GM10248 (cell line): ENCODE measurements at regions of chr3 and their contacts with region 1.

Region 1: GRCh38 chr3:138946181-138947059 is 517 bp downstream of the FOXL2 start:
- DNase-seq: no peak
- CTCF ChIP-seq: peak; percentile 20

Region 2: GRCh38 chr3:138818185-138818860 is 128.1 kb before region 1 on chr3:
- CTCF ChIA-PET with region 1: no interaction called
- POLR2A ChIA-PET with region 1: no interaction called
- DNase-seq: no peak
- CTCF ChIP-seq: no peak

Region 3: GRCh38 chr3:138935848-138936740 is 10.3 kb before region 1 on chr3:
- CTCF ChIA-PET with region 1: interaction called, 18 read pairs
- POLR2A ChIA-PET with region 1: no interaction called
- DNase-seq: peak; percentile 87
- CTCF ChIP-seq: peak; percentile 92